Ovary (tissue), 10 donors: ENCODE measurements at regions of chr11 and their contacts with region 1.

Region 1: GRCh38 chr11:27472398-27473016 is at the start of gene LGR4:
- DNase-seq: peak; percentile 89 to 91 (median 90)
- H3K4me3 ChIP-seq: peak within 1 kb of the TSS; percentile 77
- H3K27ac ChIP-seq: peak within 1 kb of the TSS; percentile 77 to 82
- H3K4me1 ChIP-seq: peaks cover 5% of the 10 kb centered on the region
- H3K27me3 ChIP-seq: no peaks in the 10 kb centered on the region
- CTCF ChIP-seq: no peak
- EP300 ChIP-seq: no peak
- POLR2A ChIP-seq: peak; percentile 34
- total RNA-seq, gene LGR4: 25.0 to 51.1 (median 33.4) TPM

Region 2: DNA sequence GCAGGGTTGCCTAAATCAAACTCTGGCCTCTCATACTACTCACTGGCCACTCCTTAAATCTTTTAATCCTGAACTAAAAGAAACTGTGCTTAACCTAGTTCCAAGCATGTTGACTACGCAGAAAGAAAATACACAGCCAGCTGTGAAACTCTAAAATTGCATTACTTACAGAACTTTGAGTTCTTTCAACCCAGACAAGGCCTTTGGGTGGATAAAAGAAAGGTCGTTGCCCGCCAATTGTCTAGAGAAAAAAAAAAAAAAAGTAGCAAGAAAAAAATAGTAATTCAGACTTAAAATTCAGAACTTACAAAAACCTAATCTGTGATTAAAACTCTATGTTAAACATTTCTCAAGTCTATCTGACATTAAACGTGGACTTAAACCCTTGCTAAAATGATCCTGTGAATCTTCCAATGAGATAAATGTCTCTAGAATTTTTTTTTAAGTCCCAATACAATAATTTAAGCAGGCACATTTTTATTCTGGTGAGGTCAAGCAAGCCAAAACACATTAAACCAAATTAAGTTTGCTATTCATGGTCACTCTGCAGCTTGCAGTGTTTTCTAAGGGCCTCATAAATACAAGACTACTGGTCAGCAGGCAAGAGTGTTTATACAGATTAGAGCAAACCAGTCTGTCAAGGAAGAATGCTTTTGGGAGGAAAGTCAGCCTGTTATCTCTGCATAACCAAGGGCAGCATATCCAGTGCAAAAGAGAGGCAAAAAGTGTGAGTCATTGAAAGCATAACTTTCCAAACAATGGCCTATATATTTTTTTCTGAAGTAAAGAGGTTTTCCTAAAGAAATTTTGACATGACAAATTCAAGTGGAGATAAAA is 80.0 kb before region 1 on chr11:
- intact Hi-C with region 1: loop called in 2 of 4 experiments (anchors 10 kb)
- DNase-seq: no peak
- H3K4me3 ChIP-seq: no peak overlapping the region
- H3K27ac ChIP-seq: peak overlapping the region in 1 of 2 donors; percentile 73
- H3K4me1 ChIP-seq: peaks cover 16% of the 10 kb centered on the region
- H3K27me3 ChIP-seq: no peaks in the 10 kb centered on the region
- CTCF ChIP-seq: no peak
- EP300 ChIP-seq: no peak
- POLR2A ChIP-seq: no peak

Region 3: DNA sequence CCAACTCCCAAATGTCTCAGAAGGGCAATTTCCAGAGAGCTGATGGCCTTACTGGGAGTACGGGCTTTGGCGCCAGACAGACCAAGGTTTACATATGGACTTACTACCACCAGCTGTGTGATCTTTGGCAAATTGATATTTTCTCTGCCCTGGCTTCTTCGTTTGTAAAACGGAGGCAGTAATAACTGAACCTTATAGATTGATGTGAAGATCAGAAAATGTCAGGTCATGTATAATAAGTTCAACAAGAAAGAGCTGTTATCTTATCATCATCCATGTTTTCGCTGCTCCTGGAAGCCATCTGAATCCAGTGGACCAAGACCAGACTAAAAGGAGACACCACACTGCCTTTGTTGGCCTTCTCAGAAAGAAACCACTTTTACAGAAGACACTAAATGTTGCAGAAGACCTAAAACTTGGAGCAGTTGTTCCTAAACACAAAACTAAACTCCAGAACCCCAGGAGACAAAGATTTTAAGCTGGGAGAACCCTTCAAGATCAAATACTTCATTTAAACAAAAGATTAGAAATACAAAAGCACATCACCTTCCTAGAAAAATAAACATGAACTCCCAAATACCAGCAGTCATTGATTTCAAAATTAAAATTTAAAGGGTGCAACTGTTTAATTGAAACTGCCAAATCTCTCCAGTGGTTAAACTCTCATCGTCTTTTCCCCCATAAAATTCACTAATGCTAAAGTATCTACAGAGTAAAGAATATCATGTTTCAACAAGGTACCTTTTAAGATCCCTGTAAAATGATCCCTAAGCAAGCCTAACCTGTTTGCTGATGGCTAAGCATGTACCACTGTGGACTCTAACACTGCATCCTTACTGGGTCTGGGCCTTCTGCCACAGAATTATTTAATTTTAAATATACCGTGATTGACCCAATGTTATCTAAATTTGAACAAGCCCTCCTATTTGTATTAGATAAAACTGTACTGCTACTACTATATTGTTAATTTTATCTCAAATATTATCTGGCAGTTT is 56.0 kb before region 1 on chr11:
- intact Hi-C with region 1: loop called in 1 of 4 experiments (anchors 10 kb)
- DNase-seq: no peak
- H3K4me3 ChIP-seq: no peak overlapping the region
- H3K27ac ChIP-seq: no peak overlapping the region
- H3K4me1 ChIP-seq: no peaks in the 10 kb centered on the region
- H3K27me3 ChIP-seq: no peaks in the 10 kb centered on the region
- CTCF ChIP-seq: no peak
- EP300 ChIP-seq: no peak
- POLR2A ChIP-seq: no peak

Region 4: DNA sequence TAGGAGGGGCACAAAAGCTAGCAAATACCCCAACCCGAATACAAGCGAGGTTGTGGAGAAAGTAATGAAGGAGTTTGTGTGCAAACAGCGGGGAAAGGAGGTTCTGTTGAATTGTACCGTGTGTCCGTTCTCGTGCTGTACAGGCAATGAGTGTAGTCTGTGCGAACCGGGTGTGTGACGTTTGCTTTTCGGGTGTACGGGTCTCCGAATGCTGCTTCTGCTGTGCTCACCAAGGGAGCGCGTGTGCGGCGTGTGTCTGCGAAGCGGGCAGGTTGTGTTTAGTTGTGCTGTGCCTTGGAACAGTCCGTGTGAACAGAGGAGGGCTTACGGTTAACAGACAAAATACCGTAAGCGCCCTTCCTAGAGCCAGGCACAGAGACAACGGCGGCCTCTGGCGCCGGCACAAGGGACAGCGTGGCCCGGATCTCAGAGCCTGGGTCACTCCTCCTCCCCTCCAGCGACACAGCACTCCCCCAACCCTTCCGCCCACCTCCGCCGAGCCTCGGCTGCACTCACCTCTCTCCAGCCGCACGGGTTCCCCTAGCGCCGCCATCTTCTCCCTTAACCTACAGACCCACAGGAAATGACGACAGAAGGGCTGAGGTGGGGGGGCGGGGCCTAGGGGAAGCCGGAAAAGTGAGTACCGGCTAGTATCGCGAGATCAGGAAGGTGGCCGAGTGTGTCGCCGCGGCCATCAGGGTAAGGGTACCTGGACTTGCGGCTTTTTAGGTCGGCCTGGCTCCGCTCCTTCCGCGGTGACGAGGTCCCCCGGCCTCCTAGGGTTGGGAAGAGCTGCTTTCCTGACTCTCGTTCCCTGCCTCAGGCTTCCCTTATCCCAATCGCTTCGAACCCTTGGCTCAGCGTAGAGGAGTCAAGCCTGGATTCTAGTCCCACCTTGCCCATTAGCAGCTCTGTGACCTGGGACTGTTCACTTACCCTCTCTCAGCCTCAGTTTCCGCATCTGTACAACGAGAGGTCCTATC is 34.0 kb after region 1 on chr11 and contains the start of gene LIN7C:
- intact Hi-C with region 1: no loop called
- DNase-seq: peak; percentile 95 to 98 (median 96)
- H3K4me3 ChIP-seq: peak within 1 kb of the TSS; percentile 56
- H3K27ac ChIP-seq: peak within 1 kb of the TSS; percentile 70 to 75
- H3K4me1 ChIP-seq: no peaks in the 10 kb centered on the region
- H3K27me3 ChIP-seq: no peaks in the 10 kb centered on the region
- CTCF ChIP-seq: no peak
- EP300 ChIP-seq: no peak
- POLR2A ChIP-seq: peak; percentile 89
- total RNA-seq, gene LIN7C: 28.4 to 39.0 (median 35.3) TPM